ENCODE measurements at regions of chr9 and their contacts with region 1.

Region 1: DNA sequence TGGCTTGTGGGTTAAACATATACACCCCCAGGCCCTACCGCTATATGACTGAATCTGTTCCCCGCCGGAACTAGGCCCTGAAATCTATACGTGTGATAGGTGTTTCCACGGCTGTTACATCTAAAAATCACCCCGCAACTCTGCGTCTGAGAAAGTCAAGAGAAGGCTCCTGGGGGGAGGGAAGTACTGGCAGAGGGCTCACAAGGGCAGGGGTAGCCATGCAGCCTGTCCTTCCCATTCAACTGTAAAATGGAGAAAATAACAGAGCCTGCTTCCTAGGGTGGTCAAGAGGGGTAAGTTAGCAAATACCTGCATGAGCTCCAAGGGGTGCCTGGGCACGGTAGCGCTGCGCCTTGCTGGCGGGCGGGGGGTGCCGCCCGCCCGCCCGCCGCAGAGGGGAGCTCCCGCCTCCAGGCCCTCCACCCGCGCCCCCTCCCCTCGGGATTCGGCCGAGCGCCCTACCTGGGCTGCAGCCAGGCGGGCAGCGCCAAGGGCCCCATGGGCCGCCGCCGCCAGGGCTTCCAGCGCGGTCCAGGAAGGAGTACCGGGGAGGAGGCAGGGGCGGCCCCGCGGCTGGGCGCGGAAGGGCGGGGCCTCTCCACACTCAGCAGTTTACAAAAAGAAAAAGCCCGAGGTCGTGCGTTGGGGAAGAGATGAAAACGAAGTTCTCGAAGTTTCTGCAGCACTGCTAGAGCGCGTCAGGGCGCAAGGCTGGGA is at the start of gene HACD4:
- H3K4me3 Mint-ChIP-seq: peak within 1 kb of the TSS; percentile 13
- H3K27ac Mint-ChIP-seq: no peak within 1 kb of the TSS
- H3K4me1 Mint-ChIP-seq: peaks cover 9% of the 10 kb centered on the region
- H3K27me3 Mint-ChIP-seq: peaks cover 1% of the 10 kb centered on the region

Region 2: DNA sequence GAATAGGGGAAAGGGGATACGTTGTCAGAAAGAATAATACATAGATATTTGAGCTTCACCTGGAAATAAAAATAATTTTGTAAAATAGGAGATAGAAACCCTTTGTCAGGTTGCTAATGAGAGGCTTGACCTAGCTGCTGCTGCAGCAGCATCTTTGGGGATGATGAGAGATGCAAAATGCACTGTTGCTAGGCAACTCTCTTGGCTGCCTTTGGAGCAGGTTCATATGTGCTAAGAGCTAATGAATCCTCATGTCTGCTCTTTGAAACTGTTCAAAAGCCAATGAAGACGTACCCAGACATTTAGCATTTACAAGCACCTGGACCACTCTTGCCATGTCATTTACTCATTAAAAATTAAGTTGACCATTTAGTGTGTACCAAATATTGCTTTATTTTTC is 225.5 kb before region 1 on chr9:
- intact Hi-C with region 1: no loop called
- H3K4me3 Mint-ChIP-seq: no peak overlapping the region
- H3K27ac Mint-ChIP-seq: no peak overlapping the region
- H3K4me1 Mint-ChIP-seq: peaks cover 7% of the 10 kb centered on the region
- H3K27me3 Mint-ChIP-seq: peaks cover 3% of the 10 kb centered on the region

Region 3: DNA sequence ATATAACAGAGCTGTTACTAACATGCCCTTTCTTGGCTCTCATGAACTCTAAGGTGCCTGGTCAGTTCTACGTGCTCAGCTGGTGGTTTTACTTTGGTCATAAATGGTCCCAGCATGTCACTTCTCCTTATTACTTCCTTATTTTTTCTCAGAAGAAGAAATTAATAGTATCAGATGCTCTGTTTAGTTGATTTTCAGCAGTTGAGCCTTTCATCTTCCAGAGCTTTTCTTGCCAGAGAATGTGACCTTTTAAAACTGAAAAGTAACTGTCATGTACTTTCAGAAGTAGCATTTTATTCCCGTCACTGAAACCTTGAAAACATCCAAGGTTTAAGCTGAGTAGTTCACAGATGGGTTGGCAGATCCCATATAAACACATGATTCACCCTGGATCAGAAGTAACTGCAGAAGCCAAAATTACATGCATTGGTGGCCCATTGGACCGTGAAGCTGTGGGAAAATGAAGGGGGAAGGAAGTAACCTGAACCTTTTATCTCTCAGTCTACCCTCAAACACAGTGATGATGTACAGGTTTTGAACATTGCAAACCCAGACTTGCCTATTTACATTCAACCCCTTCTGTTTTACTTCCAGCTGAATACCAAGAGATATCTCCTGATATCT is 50.3 kb before region 1 on chr9:
- intact Hi-C with region 1: loop called (anchors 5 kb)
- H3K4me3 Mint-ChIP-seq: no peak overlapping the region
- H3K27ac Mint-ChIP-seq: peak overlapping the region; percentile 60
- H3K4me1 Mint-ChIP-seq: peaks cover 14% of the 10 kb centered on the region
- H3K27me3 Mint-ChIP-seq: no peaks in the 10 kb centered on the region

Region 4: GRCh38 chr9:21016701-21017491 is 14.4 kb before region 1 on chr9:
- intact Hi-C with region 1: no loop called
- H3K4me3 Mint-ChIP-seq: no peak overlapping the region
- H3K27ac Mint-ChIP-seq: no peak overlapping the region
- H3K4me1 Mint-ChIP-seq: peaks cover 22% of the 10 kb centered on the region
- H3K27me3 Mint-ChIP-seq: no peaks in the 10 kb centered on the region

Region 5: DNA sequence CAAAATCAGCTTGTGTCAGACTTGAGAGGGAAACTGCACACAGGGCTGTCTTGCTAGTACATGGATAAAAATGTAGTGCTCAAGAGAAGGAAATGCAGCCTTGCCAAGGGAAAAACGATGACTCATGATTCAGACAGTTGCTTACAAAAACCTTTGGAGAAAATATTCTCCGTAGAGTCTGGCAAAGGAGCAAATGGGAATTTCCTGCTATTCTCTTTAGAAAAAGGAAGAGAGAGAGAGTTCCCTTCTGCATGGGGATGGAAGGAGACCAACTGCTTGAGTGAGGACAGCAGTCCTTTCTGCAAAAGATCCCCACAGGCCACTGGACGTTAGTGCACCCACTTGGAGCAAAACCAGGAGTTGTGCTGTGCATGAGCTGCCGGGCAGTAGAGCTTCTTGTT is 38.9 kb after region 1 on chr9:
- intact Hi-C with region 1: loop called (anchors 5 kb)
- H3K4me3 Mint-ChIP-seq: no peak overlapping the region
- H3K27ac Mint-ChIP-seq: no peak overlapping the region
- H3K4me1 Mint-ChIP-seq: peaks cover 21% of the 10 kb centered on the region
- H3K27me3 Mint-ChIP-seq: peaks cover 2% of the 10 kb centered on the region

Region 6: DNA sequence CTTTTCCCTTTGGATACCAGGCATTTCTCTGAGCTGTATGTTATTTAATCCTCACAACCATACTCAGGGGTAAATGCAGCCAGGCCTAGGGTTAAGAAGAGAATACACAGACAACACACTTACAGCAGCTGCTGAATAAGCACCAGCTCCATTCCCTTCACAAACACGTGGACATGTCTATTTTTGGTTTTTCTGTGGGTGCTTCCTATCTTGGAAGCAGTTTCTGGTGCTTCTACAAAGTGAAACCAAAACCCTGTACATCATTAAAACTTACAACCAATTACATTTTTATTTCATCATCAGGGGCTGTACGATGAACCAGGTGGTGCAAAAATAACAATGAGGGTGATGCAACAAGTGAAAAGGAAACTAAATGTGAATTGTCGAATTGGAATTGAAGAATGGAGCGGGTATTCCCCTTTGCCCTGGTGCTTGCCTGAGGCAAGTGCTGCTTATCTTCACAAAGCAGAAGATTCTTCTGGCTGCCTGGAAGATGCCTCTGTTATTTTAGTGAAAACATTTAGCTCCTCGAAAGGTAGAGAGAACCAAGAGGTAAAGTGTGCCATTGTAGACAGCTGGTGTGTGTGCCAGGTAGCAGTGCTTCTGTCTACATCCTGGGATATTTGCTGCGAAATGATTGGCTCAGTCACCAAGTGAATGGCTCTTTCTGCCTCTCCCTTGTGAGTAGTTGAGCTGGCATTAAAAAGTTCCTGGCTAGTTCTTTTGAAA is 65.1 kb after region 1 on chr9:
- intact Hi-C with region 1: loop called (anchors 5 kb)
- H3K4me3 Mint-ChIP-seq: peak overlapping the region; percentile 20
- H3K27ac Mint-ChIP-seq: peak overlapping the region; percentile 17
- H3K4me1 Mint-ChIP-seq: peaks cover 30% of the 10 kb centered on the region
- H3K27me3 Mint-ChIP-seq: no peaks in the 10 kb centered on the region

Measured in dendritic cell treated with granulocyte-macrophage colony-stimulating factor and Interleukin-4, amounts not matched to agents 40 ng/mL and 50 ng/mL, for 4 days (primary cell).